Cardiac septum (tissue), 1 donor: ENCODE measurements at regions of chrX and their contacts with region 1.

Region 1: GRCh38 chrX:143633461-143634308 is 2.2 kb downstream of the SLITRK4 start:
- DNase-seq: no peak

Region 2: DNA sequence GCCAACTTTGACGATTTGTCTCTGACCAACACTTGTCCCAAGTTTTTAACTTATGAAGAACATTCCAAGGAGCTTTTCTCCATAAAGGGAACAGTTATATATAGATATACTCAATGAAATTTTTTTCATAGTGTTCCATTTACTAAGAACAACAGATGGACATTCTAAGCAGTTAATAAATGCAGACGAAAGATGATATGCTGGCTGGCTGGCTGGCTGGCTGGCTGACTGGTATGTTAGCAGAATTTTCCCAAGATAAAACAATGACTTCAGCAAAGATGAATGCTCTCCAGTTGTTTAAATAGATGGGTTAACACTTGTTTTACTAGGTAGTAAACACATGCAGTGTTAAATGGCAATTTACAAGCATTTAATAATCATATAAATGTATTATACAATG is 178.6 kb before region 1 on chrX:
- intact Hi-C with region 1: loop called (anchors 10 kb)
- DNase-seq: no peak